Cardiac septum (tissue), 1 donor: ENCODE measurements at regions of chr22 and their contacts with region 1.

Region 1: DNA sequence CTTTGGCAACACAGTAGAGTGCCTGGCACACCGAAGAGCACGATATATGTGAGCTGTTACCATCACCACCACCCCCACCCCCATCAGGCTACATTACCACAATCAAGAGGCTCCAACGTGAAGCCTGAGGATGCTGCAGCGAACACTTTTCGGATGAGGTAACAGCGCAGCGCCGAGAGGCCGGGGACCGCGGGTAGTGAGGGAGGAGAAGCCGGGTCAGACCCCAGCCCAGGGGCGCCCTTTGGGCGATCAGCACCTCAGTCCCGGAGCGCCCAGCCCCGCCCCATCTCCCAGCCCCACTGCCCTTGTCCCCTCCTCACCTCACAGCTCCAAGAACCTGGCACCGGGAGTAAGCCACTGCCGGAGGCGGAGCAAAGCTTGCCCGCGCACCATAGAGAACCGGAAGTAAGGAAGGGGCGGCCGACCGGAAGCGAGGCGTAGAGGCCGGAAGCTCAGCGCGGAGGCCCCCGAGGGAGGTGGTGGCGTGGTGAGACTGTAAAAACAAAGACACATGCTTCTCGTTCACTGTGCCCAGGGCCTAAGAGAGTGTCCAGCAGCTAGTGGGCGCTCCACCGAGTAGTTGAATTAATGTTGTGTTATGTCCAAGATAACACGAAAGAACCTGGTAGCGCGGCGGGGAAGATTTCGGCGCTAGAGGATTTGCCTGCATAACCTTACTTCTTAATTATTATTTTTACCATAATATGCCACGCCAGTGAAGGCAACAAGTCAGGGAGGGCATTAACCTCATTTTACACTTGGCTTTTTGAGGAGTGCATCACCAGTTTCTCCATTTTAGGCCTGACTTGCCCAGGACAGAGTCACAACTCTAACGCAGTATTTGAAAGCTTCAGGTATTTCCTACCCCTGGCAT is at the start of gene THOC5:
- DNase-seq: peak; percentile 97
- total RNA-seq, gene THOC5: 37.0 TPM

Region 2: DNA sequence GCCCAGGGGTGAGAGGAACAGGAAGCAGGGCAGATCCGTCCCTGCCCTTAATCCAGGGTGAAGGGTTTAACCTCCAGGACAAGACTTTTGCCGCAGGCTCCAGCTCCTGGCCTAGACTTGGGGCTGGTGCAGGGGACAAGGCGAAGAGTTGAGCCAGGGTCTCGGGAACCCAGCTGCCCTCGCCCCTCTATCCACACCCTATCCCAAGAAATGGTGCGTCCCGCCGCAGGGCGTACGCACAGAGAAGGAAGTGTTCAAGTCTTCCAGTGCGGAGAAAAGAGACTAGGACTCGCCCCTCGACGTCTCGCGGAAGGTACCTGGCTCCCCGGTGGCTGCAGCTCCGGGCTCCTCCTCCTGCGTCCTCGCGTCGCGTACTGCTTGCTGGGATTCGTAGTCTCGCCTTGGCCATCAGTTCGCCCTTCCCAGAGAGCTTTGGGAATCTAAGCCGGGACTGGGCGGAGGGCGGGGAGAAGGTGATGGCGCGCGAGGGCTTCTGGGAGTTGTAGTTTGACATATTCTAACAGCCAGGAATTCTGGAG is 213.1 kb after region 1 on chr22 and contains the start of gene ZMAT5:
- intact Hi-C with region 1: loop called (anchors 5 kb)
- DNase-seq: peak; percentile 98
- total RNA-seq, gene ZMAT5: 17.1 TPM